Activated T-helper 1 cell treated with anti-CD3 and anti-CD28 coated beads, Interleukin-12 subunit alpha, Interleukin-12 subunit beta, Interleukin-2, Interleukin-4 antibody, amounts not matched to agents 30 ng/mL and 10 ng/mL and 1 ng/mL, durations not matched to agents 14 hours and 24 hours and 36 hours (primary cell): ENCODE measurements at regions of chr3 and their contacts with region 1.

Region 1: GRCh38 chr3:195271116-195271858 is at the start of gene XXYLT1:
- DNase-seq: peak; percentile 85
- H3K4me3 Mint-ChIP-seq: peak within 1 kb of the TSS; percentile 89
- H3K27ac Mint-ChIP-seq: peak within 1 kb of the TSS; percentile 91
- H3K4me1 Mint-ChIP-seq: peaks cover 30% of the 10 kb centered on the region
- H3K27me3 Mint-ChIP-seq: no peaks in the 10 kb centered on the region
- total RNA-seq, gene XXYLT1: 14.5 and 14.9 TPM in 2 replicates

Region 2: GRCh38 chr3:194486540-194487288 is 784.6 kb before region 1 on chr3 and contains the start of gene ATP13A3:
- intact Hi-C with region 1: loop called (anchors 2 kb)
- DNase-seq: peak; percentile 87
- H3K4me3 Mint-ChIP-seq: peak within 1 kb of the TSS; percentile 96
- H3K27ac Mint-ChIP-seq: peak within 1 kb of the TSS; percentile 95
- H3K4me1 Mint-ChIP-seq: peaks cover 55% of the 10 kb centered on the region
- H3K27me3 Mint-ChIP-seq: peaks cover 1% of the 10 kb centered on the region
- total RNA-seq, gene ATP13A3: 198 and 206 TPM in 2 replicates

Region 3: DNA sequence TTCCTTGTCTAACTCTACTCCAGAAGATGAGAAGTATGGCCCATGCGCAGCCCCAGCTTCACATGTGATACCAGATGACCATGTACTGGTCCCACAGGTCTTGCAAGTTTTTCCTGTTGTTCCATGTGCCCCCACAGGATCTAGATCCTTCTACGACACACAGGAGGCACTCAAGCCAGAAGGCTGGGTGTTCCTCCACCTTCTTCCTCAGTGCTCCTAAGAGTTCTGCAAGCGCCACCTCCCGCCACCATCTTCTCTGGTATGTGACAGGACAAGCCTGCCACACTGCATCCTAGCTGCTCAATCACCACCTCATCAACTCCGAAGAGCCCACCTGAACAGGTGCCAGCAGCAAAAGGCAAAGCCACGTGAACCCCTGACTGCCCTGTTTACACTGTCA is 43.4 kb before region 1 on chr3:
- intact Hi-C with region 1: no loop called
- DNase-seq: no peak
- H3K4me3 Mint-ChIP-seq: no peak overlapping the region
- H3K27ac Mint-ChIP-seq: no peak overlapping the region
- H3K4me1 Mint-ChIP-seq: peaks cover 7% of the 10 kb centered on the region
- H3K27me3 Mint-ChIP-seq: peaks cover 4% of the 10 kb centered on the region

Region 4: GRCh38 chr3:195259475-195260279 is 11.6 kb before region 1 on chr3:
- intact Hi-C with region 1: loop called (anchors 1 kb)
- DNase-seq: peak; percentile 76
- H3K4me3 Mint-ChIP-seq: peak overlapping the region; percentile 15
- H3K27ac Mint-ChIP-seq: no peak overlapping the region
- H3K4me1 Mint-ChIP-seq: peaks cover 24% of the 10 kb centered on the region
- H3K27me3 Mint-ChIP-seq: no peaks in the 10 kb centered on the region

Region 5: GRCh38 chr3:195312714-195313113 is 41.4 kb after region 1 on chr3:
- intact Hi-C with region 1: no loop called
- DNase-seq: no peak
- H3K4me3 Mint-ChIP-seq: no peak overlapping the region
- H3K27ac Mint-ChIP-seq: no peak overlapping the region
- H3K4me1 Mint-ChIP-seq: no peaks in the 10 kb centered on the region
- H3K27me3 Mint-ChIP-seq: no peaks in the 10 kb centered on the region

Region 6: DNA sequence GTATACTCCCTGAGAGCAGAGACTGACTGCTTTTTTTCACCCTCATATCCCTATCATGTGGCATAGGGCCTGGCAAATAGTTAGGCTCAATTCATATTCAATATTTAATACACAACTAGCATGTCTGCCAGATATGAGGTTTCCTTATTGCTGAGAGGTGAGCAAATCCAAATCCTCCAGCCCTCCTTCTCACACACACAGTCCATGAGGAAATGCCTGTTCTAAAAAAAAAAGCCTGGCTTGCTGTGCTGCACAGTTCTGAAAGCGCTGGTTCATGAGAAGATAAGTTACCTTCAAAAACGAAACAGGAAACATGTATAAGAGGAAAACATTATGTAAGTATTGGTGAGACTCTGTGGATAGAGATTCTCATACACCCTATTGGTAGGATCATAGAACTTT is 187.0 kb after region 1 on chr3:
- intact Hi-C with region 1: loop called (anchors 5 kb)
- DNase-seq: no peak
- H3K4me3 Mint-ChIP-seq: no peak overlapping the region
- H3K27ac Mint-ChIP-seq: peak overlapping the region; percentile 80
- H3K4me1 Mint-ChIP-seq: peaks cover 21% of the 10 kb centered on the region
- H3K27me3 Mint-ChIP-seq: peaks cover 1% of the 10 kb centered on the region

Region 7: DNA sequence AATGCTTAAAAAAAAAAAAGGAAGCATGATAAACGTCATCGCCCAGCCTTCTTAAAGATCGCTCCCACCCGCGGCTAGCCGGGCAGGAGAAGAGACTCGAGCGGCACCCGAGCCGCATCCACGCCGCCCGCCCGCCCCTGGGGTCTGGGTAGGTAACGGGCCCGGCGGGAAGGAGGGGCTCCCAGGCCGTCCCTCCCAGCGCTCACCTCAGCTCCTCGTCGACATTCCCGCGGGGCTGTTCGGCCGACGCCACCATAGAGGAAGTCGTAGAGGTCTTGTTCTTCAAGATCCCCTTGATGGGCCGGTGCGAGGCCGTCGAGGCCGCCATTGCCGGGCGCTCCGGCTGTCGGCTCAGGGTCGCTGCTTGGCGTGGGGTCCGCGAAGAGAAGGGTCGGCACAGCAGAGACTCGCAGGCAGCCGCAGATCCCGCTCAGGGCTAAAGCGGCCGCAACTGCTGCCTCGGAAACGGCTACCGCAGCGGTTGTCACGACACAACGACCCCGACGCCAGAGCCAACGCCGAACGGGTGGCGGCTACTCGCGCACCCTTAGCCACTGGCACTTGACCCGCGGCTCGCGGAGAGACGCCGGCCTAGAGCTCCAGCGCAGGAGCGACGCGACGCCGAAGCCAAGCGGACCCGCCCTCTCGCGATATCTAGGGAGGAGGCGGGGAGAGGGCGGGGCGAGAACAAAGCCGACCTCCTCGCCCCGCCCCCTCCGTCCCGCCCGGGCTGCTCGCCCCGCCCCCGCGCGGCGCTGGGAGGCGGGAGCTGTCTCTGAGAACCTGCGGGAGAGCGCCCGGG is 271.6 kb after region 1 on chr3 and contains the start of gene PPP1R2:
- intact Hi-C with region 1: loop called (anchors 1 kb)
- DNase-seq: peak; percentile 88
- H3K4me3 Mint-ChIP-seq: peak within 1 kb of the TSS; percentile 88
- H3K27ac Mint-ChIP-seq: peak within 1 kb of the TSS; percentile 82
- H3K4me1 Mint-ChIP-seq: peaks cover 84% of the 10 kb centered on the region
- H3K27me3 Mint-ChIP-seq: no peaks in the 10 kb centered on the region
- total RNA-seq, gene PPP1R2: 98.8 and 106 TPM in 2 replicates

Region 8: GRCh38 chr3:195850857-195851543 is 579.7 kb after region 1 on chr3:
- intact Hi-C with region 1: loop called (anchors 5 kb)
- DNase-seq: peak; percentile 83
- H3K4me3 Mint-ChIP-seq: no peak overlapping the region
- H3K27ac Mint-ChIP-seq: peak overlapping the region; percentile 41
- H3K4me1 Mint-ChIP-seq: no peaks in the 10 kb centered on the region
- H3K27me3 Mint-ChIP-seq: peaks cover 5% of the 10 kb centered on the region